PC-3 (cell line): ENCODE measurements at regions of chr11 and their contacts with region 1.

Region 1: GRCh38 chr11:70437111-70437784 is 38.9 kb downstream of the CTTN start:
- DNase-seq: no peak
- ATAC-seq: no peak
- H3K4me3 ChIP-seq: no peak overlapping the region
- H3K27ac ChIP-seq: no peak overlapping the region
- H3K4me1 ChIP-seq: no peaks in the 10 kb centered on the region
- H3K27me3 ChIP-seq: no peaks in the 10 kb centered on the region
- CTCF ChIP-seq: no peak

Region 2: DNA sequence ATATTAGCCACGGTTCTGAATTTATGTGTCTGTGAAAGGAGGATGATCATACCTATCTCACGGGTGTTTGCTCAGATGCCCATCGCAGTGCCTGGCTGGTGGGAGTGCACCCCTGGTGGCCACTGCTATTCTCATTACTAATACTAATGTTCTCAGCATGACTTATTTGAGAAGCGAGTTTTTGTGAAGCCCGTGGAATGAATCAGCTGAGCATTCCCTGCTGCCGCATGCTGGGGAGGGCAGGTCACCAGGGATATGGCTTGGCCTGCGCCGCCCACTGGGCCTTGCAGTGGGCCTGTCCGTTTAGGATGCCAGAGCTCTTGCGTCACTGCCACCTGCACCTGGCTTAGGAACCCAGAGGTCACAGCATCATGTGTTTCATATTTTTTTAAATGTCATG is 22.1 kb before region 1 on chr11:
- CTCF ChIA-PET with region 1: no interaction called
- POLR2A ChIA-PET with region 1: no interaction called
- intact Hi-C with region 1: no loop called
- DNase-seq: peak; percentile 15
- ATAC-seq: peak; percentile 55; the same call in 1 of the 2 replicates
- H3K4me3 ChIP-seq: no peak overlapping the region
- H3K27ac ChIP-seq: no peak overlapping the region
- H3K4me1 ChIP-seq: no peaks in the 10 kb centered on the region
- H3K27me3 ChIP-seq: no peaks in the 10 kb centered on the region
- CTCF ChIP-seq: peak; percentile 54; the same call in 1 of the 2 replicates

Region 3: DNA sequence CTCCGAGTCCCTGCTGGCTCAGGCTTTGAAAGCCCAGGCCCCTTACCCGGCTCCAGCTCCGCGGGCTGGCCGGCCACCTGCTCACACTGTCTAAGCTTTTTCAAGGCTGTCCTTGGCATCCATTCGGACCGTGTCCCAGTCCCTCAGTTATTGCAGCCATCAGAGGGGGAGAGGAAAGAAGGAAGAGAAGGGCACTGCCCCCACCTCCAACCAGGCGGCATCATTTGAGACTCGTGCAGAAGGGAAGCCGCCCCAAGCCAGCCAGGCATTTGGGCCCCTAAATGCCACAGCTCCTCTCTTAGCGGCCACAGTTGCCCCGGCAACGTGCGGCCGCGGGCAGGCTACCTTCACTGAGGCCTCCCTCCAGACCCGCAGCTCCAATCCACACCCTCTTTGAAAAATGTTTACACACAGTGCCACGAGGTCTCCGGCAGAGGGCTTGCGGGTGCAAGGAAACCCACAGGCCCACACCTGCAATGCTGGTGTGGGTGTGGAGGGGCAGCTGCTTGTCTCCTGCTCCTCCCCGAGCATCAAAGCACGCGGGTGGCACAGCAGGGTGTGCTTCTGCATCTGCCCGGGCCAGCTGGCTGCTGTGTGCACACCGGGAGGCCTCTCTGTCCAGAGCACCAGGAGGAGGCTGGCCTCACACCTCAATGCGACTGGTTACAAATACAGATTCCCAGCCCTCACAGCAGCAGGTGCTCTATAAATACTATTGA is 85.5 kb after region 1 on chr11:
- CTCF ChIA-PET with region 1: no interaction called
- POLR2A ChIA-PET with region 1: no interaction called
- intact Hi-C with region 1: no loop called
- DNase-seq: no peak
- ATAC-seq: no peak
- H3K4me3 ChIP-seq: no peak overlapping the region
- H3K27ac ChIP-seq: no peak overlapping the region
- H3K4me1 ChIP-seq: no peaks in the 10 kb centered on the region
- H3K27me3 ChIP-seq: no peaks in the 10 kb centered on the region
- CTCF ChIP-seq: no peak

Region 4: DNA sequence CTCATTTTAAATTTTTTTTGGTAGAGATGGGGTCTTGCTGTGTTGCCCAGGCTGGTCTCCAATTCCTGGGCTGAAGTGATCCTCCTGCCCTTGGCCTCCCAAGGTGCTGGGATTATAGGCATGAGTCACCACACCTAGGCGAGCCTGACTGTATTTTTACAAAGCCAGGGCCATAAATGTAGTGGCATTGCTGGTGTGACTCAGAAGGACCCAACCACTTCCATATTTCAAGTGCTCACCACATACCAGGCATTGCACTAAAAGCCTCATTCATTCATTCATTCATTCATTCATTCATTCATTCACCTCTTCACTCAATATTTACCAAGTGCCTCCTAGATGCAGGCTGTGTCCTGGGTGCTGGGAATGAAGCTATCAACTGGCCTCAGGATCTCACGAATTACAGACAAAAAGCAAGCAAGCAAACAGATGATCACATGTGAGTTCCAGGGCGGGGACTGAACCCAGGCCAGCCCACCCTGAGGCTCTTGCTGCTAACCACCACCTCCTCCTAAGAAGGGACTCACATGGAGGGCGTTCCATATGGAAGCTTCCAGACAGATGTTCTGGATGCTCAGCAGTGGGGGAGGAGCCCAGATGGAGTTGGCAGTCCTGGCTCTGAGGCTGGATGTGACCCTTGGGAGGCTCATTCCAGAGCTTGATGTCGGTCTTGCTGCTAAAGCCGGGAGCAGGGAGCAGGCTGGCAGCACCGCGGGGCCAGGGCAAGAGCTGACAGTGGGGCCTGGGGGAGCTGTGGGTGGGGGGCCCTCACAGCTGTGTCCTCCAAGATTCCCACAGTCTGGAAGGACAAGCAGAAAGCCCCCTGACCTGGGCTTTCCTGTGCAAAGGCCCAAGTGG is 119.9 kb after region 1 on chr11:
- CTCF ChIA-PET with region 1: no interaction called
- POLR2A ChIA-PET with region 1: no interaction called
- intact Hi-C with region 1: no loop called
- DNase-seq: peak; percentile 98
- ATAC-seq: peak; percentile 90
- H3K4me3 ChIP-seq: no peak overlapping the region
- H3K27ac ChIP-seq: peak overlapping the region; percentile 68
- H3K4me1 ChIP-seq: peaks cover 38% of the 10 kb centered on the region
- H3K27me3 ChIP-seq: no peaks in the 10 kb centered on the region
- CTCF ChIP-seq: no peak

Region 5: GRCh38 chr11:70755410-70756161 is 318.3 kb after region 1 on chr11:
- CTCF ChIA-PET with region 1: no interaction called
- POLR2A ChIA-PET with region 1: no interaction called
- intact Hi-C with region 1: loop called (anchors 1 kb)
- DNase-seq: peak; percentile 85
- ATAC-seq: peak; percentile 99
- H3K4me3 ChIP-seq: no peak overlapping the region
- H3K27ac ChIP-seq: no peak overlapping the region
- H3K4me1 ChIP-seq: peaks cover 12% of the 10 kb centered on the region; the same call in 1 of the 2 replicates
- H3K27me3 ChIP-seq: no peaks in the 10 kb centered on the region
- CTCF ChIP-seq: peak; percentile 91